ENCODE measurements at regions of chr15 and their contacts with region 1.

Region 1: GRCh38 chr15:92808978-92809879 is 90.9 kb upstream of the CHD2 start:
- DNase-seq: peak; percentile 95
- H3K4me3 Mint-ChIP-seq: peak overlapping the region; percentile 72
- H3K27ac Mint-ChIP-seq: peak overlapping the region; percentile 96
- H3K4me1 Mint-ChIP-seq: peaks cover 28% of the 10 kb centered on the region
- H3K27me3 Mint-ChIP-seq: no peaks in the 10 kb centered on the region
- CTCF ChIP-seq: peak; percentile 92

Region 2: DNA sequence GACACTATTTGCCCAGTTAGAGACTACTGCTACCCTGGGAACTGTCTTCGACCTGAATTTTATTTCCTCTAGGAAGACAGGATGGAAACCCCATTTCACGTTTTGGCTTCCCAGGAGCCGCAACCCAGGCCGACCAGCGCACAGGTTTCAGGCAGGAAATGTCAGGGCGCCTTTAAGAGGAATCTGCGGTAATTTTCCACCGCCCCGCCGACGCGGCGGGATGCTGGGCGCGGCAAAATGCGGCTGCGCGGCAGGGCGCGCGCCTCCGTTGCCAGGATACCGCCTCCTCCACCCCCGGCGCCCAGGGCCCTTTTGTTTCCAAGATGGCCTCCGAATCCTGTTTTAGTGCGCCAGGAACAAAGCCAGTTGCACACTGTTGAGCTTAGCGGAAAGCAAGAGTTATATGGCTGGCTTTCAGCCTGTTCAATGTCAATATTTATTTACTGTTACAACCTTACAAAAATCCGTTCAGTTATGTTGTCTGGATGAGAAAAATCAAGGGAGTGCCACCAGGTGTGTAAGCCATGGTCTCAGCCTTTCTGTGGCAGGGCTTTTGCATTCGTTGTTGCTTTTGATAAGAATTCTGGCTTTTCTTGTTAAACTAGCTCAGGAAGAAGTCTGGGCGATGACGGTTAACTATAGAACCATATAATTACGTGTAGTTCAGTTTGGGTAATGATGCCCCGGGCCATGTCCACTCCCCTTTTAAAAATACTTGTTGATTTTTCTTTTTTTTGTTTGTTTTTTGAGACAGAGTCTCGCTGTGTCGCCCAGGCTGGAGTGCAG is 11.2 kb after region 1 on chr15:
- CTCF ChIA-PET with region 1: interaction called, 14 read pairs
- POLR2A ChIA-PET with region 1: interaction called, 280 read pairs
- intact Hi-C with region 1: loop called (anchors 1 kb)
- DNase-seq: peak; percentile 91
- H3K4me3 Mint-ChIP-seq: peak overlapping the region; percentile 72
- H3K27ac Mint-ChIP-seq: peak overlapping the region; percentile 98
- H3K4me1 Mint-ChIP-seq: peaks cover 25% of the 10 kb centered on the region
- H3K27me3 Mint-ChIP-seq: no peaks in the 10 kb centered on the region
- CTCF ChIP-seq: no peak

Region 3: DNA sequence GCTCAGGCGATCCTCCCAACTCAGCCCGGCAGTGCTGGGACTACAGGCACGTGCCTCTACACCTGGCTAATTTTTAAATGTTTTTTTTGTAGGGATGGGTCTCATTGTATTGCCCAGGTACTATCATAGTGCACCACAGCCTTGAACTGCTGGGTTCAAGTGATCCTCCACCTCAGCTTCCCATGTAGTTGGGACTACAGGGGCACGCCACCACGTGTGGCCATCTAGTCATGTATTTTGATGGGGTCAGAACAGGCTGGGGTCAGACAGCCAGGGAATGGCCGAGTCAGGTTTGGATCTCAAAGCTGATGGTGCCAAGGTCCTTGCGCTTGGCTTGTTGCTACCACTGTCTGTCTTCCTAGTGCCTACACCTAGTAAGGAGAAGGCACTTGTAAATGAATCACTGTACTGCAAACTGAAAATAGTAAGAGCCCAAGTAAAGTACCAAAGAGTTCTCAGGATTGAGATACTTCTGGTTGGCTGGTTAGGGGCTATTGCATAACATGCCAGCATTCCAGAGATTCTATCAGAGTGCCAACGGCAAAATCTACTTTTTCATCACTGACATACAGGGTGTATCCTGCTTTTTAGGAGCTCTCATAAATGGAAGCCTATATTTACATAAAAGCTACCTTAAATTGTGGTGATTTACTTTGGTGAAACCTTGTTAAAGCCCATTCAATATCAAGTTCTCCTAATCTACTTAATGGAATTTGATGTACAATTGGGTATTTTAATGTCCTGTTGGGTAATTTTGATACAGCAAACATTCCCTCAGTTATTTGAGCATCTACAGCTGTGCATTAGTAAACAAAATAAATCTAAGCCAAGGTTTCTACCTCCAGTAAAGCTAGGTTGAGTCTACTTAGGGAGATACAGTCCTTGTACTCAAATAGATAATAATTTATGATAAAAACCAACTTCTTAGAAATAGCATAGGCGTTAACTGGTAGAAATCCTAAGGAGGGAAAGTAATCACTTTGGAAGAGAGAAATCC is 60.1 kb after region 1 on chr15:
- CTCF ChIA-PET with region 1: interaction called, 4 read pairs
- POLR2A ChIA-PET with region 1: interaction called, 109 read pairs
- intact Hi-C with region 1: no loop called
- DNase-seq: peak; percentile 81
- H3K4me3 Mint-ChIP-seq: peak overlapping the region; percentile 48
- H3K27ac Mint-ChIP-seq: peak overlapping the region; percentile 80
- H3K4me1 Mint-ChIP-seq: peaks cover 24% of the 10 kb centered on the region
- H3K27me3 Mint-ChIP-seq: no peaks in the 10 kb centered on the region
- CTCF ChIP-seq: no peak

Region 4: GRCh38 chr15:92903941-92904831 is 95.0 kb after region 1 on chr15:
- CTCF ChIA-PET with region 1: interaction called, 6 read pairs
- POLR2A ChIA-PET with region 1: interaction called, 847 read pairs
- intact Hi-C with region 1: loop called (anchors 1 kb)
- DNase-seq: peak; percentile 98
- H3K4me3 Mint-ChIP-seq: peak overlapping the region; percentile 91
- H3K27ac Mint-ChIP-seq: peak overlapping the region; percentile 99
- H3K4me1 Mint-ChIP-seq: peaks cover 35% of the 10 kb centered on the region
- H3K27me3 Mint-ChIP-seq: no peaks in the 10 kb centered on the region
- CTCF ChIP-seq: no peak

Region 5: GRCh38 chr15:92938387-92938786 is 129.2 kb after region 1 on chr15:
- CTCF ChIA-PET with region 1: interaction called, 3 read pairs
- POLR2A ChIA-PET with region 1: interaction called, 13 read pairs
- intact Hi-C with region 1: no loop called
- DNase-seq: no peak
- H3K4me3 Mint-ChIP-seq: no peak overlapping the region
- H3K27ac Mint-ChIP-seq: no peak overlapping the region
- H3K4me1 Mint-ChIP-seq: no peaks in the 10 kb centered on the region
- H3K27me3 Mint-ChIP-seq: no peaks in the 10 kb centered on the region
- CTCF ChIP-seq: peak; percentile 16